Mammary epithelial cell (primary cell): ENCODE measurements at regions of chr3 and their contacts with region 1.

Region 1: DNA sequence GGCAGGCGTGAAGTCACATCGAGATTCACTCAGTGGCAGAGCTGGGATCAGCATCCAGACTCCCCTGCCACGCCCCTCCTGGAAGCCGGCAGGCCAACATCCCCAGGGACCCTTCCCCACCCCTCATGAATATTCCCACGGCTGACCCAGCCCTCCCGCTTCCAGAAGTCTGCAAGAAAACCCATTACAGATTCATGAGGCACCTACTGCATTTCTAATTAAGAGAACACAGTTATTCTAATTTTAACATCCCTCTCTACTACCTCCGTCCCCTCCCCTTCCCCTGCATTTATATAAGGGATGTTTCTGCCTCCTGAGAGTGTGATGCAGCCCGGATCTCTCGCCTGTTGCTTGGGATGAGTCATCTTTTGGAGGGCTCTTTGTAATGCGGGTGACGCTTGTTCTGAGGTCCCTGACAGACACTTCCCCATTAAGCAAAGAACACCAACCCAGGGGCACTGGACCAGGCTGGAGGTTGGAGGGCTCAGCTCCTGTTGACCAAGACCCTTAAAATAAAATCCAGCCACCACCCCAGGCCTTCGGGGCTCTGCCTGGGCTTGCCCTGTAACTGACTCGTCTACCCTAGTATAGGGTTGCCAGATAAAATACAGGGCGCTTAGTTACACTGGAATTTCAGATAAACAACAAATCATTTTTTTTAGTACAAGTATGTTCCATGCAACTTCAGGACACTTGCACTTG is 118.7 kb downstream of the NUP210 start:
- DNase-seq: peak; percentile 64
- H3K4me3 ChIP-seq: no peak overlapping the region
- H3K27ac ChIP-seq: no peak overlapping the region
- H3K4me1 ChIP-seq: peaks cover 8% of the 10 kb centered on the region
- H3K27me3 ChIP-seq: no peaks in the 10 kb centered on the region
- CTCF ChIP-seq: no peak

Region 2: DNA sequence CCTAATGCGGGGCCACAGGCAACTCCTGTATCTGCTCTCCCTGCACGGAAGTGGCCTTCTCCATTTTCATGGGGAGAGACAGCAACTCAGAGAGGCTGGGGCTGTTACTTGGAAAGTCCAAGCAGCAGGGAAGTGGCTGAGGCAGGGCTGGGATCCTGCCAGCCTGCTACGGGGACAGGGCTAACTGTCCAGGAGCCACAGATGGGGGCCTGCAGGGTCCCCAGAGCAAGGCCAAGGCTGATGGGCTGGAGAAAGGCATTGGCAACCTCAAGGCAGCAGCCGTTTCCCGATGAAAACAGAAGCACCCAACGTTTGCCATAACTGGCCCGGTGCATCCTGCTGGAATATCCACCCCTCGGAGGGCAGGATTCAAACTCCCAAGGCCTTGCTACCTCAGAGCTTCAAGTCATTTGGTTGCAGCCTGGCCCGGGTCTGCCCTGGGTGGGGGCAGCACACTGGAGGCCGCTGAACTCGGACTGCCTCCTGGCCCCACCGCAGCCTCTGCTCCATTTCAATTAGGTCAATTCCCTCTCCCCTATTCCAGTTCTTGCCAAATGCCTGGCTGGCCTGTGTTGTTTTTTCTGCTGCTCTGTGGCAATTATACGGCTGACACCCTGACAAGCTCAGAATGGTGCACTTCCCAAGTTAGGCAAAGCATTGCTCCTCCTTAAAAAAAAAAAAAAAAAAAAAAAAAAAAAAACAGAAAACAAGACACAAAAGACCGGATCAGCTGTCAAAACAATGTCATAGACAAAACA is 24.8 kb before region 1 on chr3:
- CTCF ChIA-PET with region 1: no interaction called
- dilution Hi-C with region 1: no loop called
- in situ Hi-C with region 1: no loop called
- intact Hi-C with region 1: loop called (anchors 1 kb)
- DNase-seq: no peak
- H3K4me3 ChIP-seq: no peak overlapping the region
- H3K27ac ChIP-seq: no peak overlapping the region
- H3K4me1 ChIP-seq: peaks cover 9% of the 10 kb centered on the region
- H3K27me3 ChIP-seq: peaks cover 5% of the 10 kb centered on the region
- CTCF ChIP-seq: no peak